ENCODE measurements at regions of chr12 and their contacts with region 1.

Region 1: GRCh38 chr12:45893240-45893639 is 97.1 kb downstream of the SCAF11 start:
- DNase-seq: no peak
- H3K4me3 ChIP-seq: no peak overlapping the region
- H3K27ac ChIP-seq: no peak overlapping the region
- H3K4me1 ChIP-seq: no peaks in the 10 kb centered on the region
- H3K27me3 ChIP-seq: no peaks in the 10 kb centered on the region
- CTCF ChIP-seq: no peak
- POLR2A ChIP-seq: no peak

Region 2: GRCh38 chr12:45010059-45010458 is 883.2 kb before region 1 on chr12:
- intact Hi-C with region 1: no loop called
- DNase-seq: no peak
- H3K4me3 ChIP-seq: no peak overlapping the region
- H3K27ac ChIP-seq: no peak overlapping the region
- H3K4me1 ChIP-seq: no peaks in the 10 kb centered on the region
- H3K27me3 ChIP-seq: no peaks in the 10 kb centered on the region
- CTCF ChIP-seq: no peak
- POLR2A ChIP-seq: no peak

Region 3: DNA sequence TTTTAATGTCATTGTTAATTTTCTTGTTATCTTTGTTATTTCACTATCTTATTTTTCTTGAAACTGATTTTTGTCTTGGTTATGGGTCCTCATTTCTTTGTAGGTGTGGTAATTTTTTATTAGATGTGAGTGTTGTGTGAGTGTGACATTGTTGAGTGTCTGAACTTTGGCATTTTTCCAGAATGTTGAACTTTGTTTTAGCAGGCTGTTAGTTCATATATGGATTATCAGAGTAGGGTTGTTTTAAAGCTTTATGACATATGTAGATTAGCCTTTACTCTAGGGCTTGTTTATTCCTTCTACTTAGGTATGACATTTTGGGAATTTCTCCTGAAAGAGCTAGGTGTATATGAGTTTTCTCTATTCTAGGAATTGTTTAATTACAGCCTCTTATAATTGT is 59.8 kb before region 1 on chr12:
- intact Hi-C with region 1: loop called (anchors 5 kb)
- DNase-seq: no peak
- H3K4me3 ChIP-seq: no peak overlapping the region
- H3K27ac ChIP-seq: no peak overlapping the region
- H3K4me1 ChIP-seq: no peaks in the 10 kb centered on the region
- H3K27me3 ChIP-seq: no peaks in the 10 kb centered on the region
- CTCF ChIP-seq: no peak
- POLR2A ChIP-seq: no peak